ENCODE measurements at regions of chr1 and their contacts with region 1.

Region 1: GRCh38 chr1:26035959-26036755 is 9.8 kb downstream of the SLC30A2 start:
- DNase-seq: peak; percentile 74
- H3K4me3 Mint-ChIP-seq: peak overlapping the region; percentile 91
- H3K27ac Mint-ChIP-seq: peak overlapping the region; percentile 56
- H3K4me1 Mint-ChIP-seq: peaks cover 17% of the 10 kb centered on the region
- H3K27me3 Mint-ChIP-seq: peaks cover 29% of the 10 kb centered on the region

Region 2: DNA sequence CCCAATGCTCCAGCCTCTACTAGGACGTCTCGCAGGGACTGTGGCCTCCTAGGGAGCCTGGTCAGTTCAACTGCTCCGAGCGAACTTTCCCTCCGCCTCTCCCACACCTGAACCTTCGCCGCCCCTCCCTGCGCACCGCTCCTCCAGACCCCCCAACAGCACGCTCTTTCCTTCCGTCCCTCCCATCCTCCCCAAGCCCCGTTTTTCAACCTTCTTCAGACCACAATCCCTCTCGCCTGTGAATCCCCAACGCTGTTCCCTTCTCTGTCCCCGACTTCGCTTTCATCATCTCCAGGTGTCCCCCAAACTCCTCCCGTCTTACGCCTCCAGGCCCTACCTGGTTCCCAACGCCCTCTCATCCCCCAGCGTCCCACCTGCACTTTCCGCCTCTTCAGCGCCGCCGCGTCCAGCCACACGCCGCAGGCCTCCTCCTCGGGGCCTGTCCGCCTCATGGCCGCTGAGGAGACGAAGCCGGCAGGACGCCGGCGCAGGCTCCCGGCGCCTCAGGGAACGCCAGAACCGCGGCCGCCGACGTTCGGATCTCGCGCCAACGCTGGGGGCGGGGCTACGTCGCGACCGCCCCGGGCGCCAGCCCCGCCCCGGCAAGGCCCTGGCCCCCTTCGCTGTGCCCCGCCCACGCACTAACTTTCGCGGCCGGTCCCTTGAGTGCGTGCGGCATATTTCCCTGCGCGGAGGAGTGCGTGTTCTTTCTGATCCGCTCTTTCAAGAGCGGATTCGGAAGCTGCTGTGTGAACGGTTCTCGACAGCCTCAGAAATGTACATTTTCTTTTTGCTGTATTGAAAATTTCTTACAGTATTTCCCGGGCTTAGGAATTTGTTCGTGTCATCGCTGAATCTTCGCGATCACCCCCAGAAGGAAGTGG is 177.0 kb before region 1 on chr1 and contains the start of gene AUNIP:
- intact Hi-C with region 1: loop called (anchors 1 kb)
- DNase-seq: peak; percentile 88
- H3K4me3 Mint-ChIP-seq: peak within 1 kb of the TSS; percentile 89
- H3K27ac Mint-ChIP-seq: peak within 1 kb of the TSS; percentile 89
- H3K4me1 Mint-ChIP-seq: peaks cover 35% of the 10 kb centered on the region
- H3K27me3 Mint-ChIP-seq: no peaks in the 10 kb centered on the region
- total RNA-seq, gene AUNIP: 10.2 and 12.3 TPM in 2 replicates

Region 3: DNA sequence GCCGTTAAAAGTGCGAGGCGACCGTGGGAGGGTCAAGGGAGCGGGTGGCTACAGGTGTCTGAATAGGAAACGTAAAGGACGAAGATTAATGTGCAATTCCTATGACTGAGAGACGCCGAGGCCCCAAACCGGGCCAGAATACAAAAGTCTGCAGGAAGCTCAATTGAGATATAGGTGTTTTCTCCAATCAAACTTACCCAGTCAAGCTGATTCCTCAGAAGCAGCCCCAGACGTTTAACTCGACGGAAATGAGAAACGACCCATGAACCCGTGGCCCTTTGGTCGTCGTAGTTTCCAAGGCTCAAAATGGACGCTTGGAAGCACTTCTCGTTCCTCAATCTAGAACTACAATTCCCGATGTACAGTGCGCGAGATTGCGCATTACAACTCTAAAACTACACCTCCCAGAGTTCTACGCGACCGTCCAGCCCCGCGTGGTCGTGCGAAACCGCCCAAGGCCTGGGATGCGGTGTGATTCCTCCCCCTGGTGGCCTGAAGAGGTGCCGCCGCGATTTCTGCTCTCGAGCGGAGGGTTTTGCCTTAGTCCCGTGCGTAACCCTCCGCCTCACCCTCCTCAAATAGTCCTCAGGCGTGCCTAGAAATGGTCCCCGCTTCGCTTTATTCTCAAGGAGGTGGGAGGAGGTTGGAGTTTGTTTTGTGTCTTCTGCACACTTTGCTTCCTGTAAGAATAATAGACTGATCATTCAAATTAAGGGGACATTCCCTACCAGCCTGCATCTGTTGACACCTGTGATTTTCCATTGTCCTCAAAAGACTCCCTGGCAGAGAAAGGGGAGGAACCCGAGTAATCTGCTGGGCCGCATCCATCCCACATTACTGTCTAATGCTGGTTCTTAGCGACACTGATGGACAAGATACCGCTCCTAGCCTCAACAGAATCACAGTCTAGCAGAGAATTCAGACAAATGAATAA is 38.1 kb before region 1 on chr1 and contains the start of gene PAFAH2:
- intact Hi-C with region 1: loop called (anchors 1 kb)
- DNase-seq: peak; percentile 96
- H3K4me3 Mint-ChIP-seq: peak within 1 kb of the TSS; percentile 98
- H3K27ac Mint-ChIP-seq: peak within 1 kb of the TSS; percentile 98
- H3K4me1 Mint-ChIP-seq: peaks cover 18% of the 10 kb centered on the region
- H3K27me3 Mint-ChIP-seq: no peaks in the 10 kb centered on the region
- total RNA-seq, gene PAFAH2: 8.0 and 9.0 TPM in 2 replicates

Region 4: GRCh38 chr1:26009796-26010460 is 26.2 kb before region 1 on chr1:
- intact Hi-C with region 1: no loop called
- DNase-seq: no peak
- H3K4me3 Mint-ChIP-seq: no peak overlapping the region
- H3K27ac Mint-ChIP-seq: no peak overlapping the region
- H3K4me1 Mint-ChIP-seq: no peaks in the 10 kb centered on the region
- H3K27me3 Mint-ChIP-seq: peaks cover 12% of the 10 kb centered on the region

Region 5: GRCh38 chr1:26111530-26112406 is 75.6 kb after region 1 on chr1 and contains the start of gene PDIK1L:
- intact Hi-C with region 1: loop called (anchors 2 kb)
- DNase-seq: peak; percentile 91
- H3K4me3 Mint-ChIP-seq: peak within 1 kb of the TSS; percentile 96
- H3K27ac Mint-ChIP-seq: peak within 1 kb of the TSS; percentile 92
- H3K4me1 Mint-ChIP-seq: peaks cover 36% of the 10 kb centered on the region
- H3K27me3 Mint-ChIP-seq: no peaks in the 10 kb centered on the region
- total RNA-seq, gene PDIK1L: 15.5 and 18.9 TPM in 2 replicates

Region 6: DNA sequence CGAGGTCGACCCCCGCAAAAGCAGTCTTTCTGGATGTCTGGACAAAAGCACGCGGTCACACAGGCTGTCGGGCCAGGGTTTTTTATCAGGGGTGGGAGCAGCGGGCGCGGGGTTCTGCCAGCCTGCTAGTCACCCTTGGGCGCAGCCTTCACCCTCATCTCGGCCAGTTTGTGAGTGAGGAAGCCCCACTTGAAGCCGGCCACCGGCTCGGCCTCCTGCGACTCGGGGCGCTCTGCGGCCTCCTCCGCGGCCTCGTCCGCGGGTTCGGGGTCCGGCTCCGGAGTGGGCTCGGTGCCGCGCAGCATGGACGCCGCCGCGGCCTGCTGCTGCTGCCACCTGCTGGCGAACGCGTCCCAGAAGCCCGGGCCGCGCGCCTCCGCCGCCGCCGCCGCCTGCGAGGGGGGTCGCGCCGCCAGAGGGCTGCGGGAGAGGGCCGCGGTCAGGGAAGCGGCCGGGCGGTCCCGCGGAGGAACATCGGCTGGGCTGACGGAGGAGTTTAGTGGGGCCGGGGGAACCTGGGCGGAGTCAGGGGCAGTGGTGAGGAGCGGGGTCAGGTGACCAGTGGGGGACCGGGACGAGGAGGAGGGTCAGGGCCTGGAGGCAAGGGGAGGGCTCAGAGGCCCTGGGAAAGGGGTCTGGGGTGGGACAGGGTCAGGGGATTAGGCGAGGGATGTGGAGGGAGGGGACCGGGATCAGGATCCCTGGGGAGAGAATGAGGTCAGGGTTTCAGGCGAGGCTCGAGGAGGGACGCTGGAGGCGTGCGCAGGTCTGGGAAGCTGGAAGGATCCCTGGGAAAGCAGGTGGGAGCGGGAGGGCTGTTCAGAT is 128.1 kb after region 1 on chr1:
- intact Hi-C with region 1: loop called (anchors 1 kb)
- DNase-seq: peak; percentile 41
- H3K4me3 Mint-ChIP-seq: peak overlapping the region; percentile 49
- H3K27ac Mint-ChIP-seq: no peak overlapping the region
- H3K4me1 Mint-ChIP-seq: peaks cover 22% of the 10 kb centered on the region
- H3K27me3 Mint-ChIP-seq: peaks cover 47% of the 10 kb centered on the region

Region 7: GRCh38 chr1:26252718-26253117 is 216.6 kb after region 1 on chr1:
- intact Hi-C with region 1: no loop called
- DNase-seq: no peak
- H3K4me3 Mint-ChIP-seq: no peak overlapping the region
- H3K27ac Mint-ChIP-seq: no peak overlapping the region
- H3K4me1 Mint-ChIP-seq: peaks cover 7% of the 10 kb centered on the region
- H3K27me3 Mint-ChIP-seq: no peaks in the 10 kb centered on the region

Region 8: DNA sequence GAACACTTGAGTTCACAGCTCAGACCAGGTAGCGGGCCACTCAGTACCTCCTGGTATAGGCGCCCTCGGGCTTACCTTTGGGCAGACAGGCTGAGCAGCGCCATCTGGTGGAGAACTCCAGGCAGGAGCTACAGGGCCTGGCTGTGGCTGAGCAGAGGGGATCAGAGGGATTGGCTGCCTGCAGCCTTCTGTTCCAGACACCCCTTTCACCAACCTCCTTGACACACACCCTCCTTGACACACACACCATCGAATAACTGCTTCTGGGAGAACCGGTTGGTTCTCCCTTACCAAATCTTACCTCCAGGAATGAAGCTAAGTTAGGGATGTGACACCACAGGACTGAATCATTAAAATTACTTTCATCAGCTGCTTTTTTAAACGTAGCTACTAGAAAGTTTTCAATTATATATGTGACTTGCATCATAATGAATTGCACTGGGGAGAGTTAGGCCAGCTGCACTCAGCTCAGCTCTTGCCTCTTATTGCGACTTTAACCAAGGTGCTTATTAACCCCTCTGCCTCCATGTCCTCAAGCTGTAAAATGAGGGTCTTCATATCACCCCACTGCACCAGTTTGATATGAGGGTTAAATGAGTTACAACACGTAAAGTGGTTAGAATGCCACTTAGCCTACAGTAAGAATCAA is 381.1 kb after region 1 on chr1:
- intact Hi-C with region 1: loop called (anchors 5 kb)
- DNase-seq: peak; percentile 75
- H3K4me3 Mint-ChIP-seq: no peak overlapping the region
- H3K27ac Mint-ChIP-seq: no peak overlapping the region
- H3K4me1 Mint-ChIP-seq: no peaks in the 10 kb centered on the region
- H3K27me3 Mint-ChIP-seq: peaks cover 54% of the 10 kb centered on the region

Measured in activated T-helper 1 cell treated with anti-CD3 and anti-CD28 coated beads, Interleukin-12 subunit alpha, Interleukin-12 subunit beta, Interleukin-2, Interleukin-4 antibody, amounts not matched to agents 30 ng/mL and 10 ng/mL and 1 ng/mL, durations not matched to agents 14 hours and 24 hours and 36 hours (primary cell).